B cell (primary cell): ENCODE measurements at regions of chr3 and their contacts with region 1.

Region 1: GRCh38 chr3:167843886-167844285 is 108.4 kb downstream of the SERPINI1 start:
- DNase-seq: peak; percentile 59
- ATAC-seq: peak; percentile 77
- H3K4me3 ChIP-seq: peak overlapping the region in 2 of 5 experiments; percentile 22 to 26
- H3K4me3 Mint-ChIP-seq: peak overlapping the region; percentile 54
- H3K27ac ChIP-seq: peak overlapping the region; percentile 55 to 69
- H3K27ac Mint-ChIP-seq: peak overlapping the region; percentile 85
- H3K4me1 ChIP-seq: peaks cover 16 to 26% of the 10 kb centered on the region in 2 donors
- H3K4me1 Mint-ChIP-seq: peaks cover 28% of the 10 kb centered on the region
- H3K27me3 ChIP-seq: no peaks in the 10 kb centered on the region
- H3K27me3 Mint-ChIP-seq: no peaks in the 10 kb centered on the region
- CTCF ChIP-seq: no peak

Region 2: GRCh38 chr3:167554898-167555297 is 289.0 kb before region 1 on chr3:
- CTCF ChIA-PET with region 1: no interaction called
- POLR2A ChIA-PET with region 1: no interaction called
- intact Hi-C with region 1: no loop called
- DNase-seq: no peak
- ATAC-seq: no peak
- H3K4me3 ChIP-seq: no peak overlapping the region
- H3K4me3 Mint-ChIP-seq: no peak overlapping the region
- H3K27ac ChIP-seq: no peak overlapping the region
- H3K27ac Mint-ChIP-seq: no peak overlapping the region
- H3K4me1 ChIP-seq: no peaks in the 10 kb centered on the region
- H3K4me1 Mint-ChIP-seq: no peaks in the 10 kb centered on the region
- H3K27me3 ChIP-seq: no peaks in the 10 kb centered on the region
- H3K27me3 Mint-ChIP-seq: no peaks in the 10 kb centered on the region
- CTCF ChIP-seq: no peak

Region 3: GRCh38 chr3:167830007-167830406 is 13.9 kb before region 1 on chr3:
- CTCF ChIA-PET with region 1: no interaction called
- POLR2A ChIA-PET with region 1: interaction called, 4 read pairs
- intact Hi-C with region 1: loop called (anchors 1 kb)
- DNase-seq: peak; percentile 64
- ATAC-seq: peak; percentile 87
- H3K4me3 ChIP-seq: peak overlapping the region in 2 of 5 experiments; percentile 11
- H3K4me3 Mint-ChIP-seq: peak overlapping the region; percentile 56
- H3K27ac ChIP-seq: peak overlapping the region; percentile 64 to 79
- H3K27ac Mint-ChIP-seq: peak overlapping the region; percentile 91
- H3K4me1 ChIP-seq: peaks cover 23 to 27% of the 10 kb centered on the region in 2 donors
- H3K4me1 Mint-ChIP-seq: peaks cover 22% of the 10 kb centered on the region
- H3K27me3 ChIP-seq: no peaks in the 10 kb centered on the region
- H3K27me3 Mint-ChIP-seq: no peaks in the 10 kb centered on the region
- CTCF ChIP-seq: no peak